ENCODE measurements at regions of chr19 and their contacts with region 1.

Region 1: GRCh38 chr19:39435499-39436349 is at the start of gene RPS16:
- DNase-seq: peak; percentile 100
- H3K4me3 Mint-ChIP-seq: peak within 1 kb of the TSS; percentile 100
- H3K27ac Mint-ChIP-seq: peak within 1 kb of the TSS; percentile 100
- H3K4me1 Mint-ChIP-seq: peaks cover 55% of the 10 kb centered on the region
- H3K27me3 Mint-ChIP-seq: no peaks in the 10 kb centered on the region
- total RNA-seq, gene RPS16: 3,682 to 3,746 TPM

Region 2: GRCh38 chr19:39351537-39352064 is 84.1 kb before region 1 on chr19:
- CTCF ChIA-PET with region 1: interaction called, 3 read pairs
- POLR2A ChIA-PET with region 1: interaction called, 3 read pairs
- intact Hi-C with region 1: loop called (anchors 1 kb)
- DNase-seq: peak; percentile 75
- H3K4me3 Mint-ChIP-seq: no peak overlapping the region
- H3K27ac Mint-ChIP-seq: peak overlapping the region; percentile 84
- H3K4me1 Mint-ChIP-seq: peaks cover 42% of the 10 kb centered on the region
- H3K27me3 Mint-ChIP-seq: no peaks in the 10 kb centered on the region

Region 3: DNA sequence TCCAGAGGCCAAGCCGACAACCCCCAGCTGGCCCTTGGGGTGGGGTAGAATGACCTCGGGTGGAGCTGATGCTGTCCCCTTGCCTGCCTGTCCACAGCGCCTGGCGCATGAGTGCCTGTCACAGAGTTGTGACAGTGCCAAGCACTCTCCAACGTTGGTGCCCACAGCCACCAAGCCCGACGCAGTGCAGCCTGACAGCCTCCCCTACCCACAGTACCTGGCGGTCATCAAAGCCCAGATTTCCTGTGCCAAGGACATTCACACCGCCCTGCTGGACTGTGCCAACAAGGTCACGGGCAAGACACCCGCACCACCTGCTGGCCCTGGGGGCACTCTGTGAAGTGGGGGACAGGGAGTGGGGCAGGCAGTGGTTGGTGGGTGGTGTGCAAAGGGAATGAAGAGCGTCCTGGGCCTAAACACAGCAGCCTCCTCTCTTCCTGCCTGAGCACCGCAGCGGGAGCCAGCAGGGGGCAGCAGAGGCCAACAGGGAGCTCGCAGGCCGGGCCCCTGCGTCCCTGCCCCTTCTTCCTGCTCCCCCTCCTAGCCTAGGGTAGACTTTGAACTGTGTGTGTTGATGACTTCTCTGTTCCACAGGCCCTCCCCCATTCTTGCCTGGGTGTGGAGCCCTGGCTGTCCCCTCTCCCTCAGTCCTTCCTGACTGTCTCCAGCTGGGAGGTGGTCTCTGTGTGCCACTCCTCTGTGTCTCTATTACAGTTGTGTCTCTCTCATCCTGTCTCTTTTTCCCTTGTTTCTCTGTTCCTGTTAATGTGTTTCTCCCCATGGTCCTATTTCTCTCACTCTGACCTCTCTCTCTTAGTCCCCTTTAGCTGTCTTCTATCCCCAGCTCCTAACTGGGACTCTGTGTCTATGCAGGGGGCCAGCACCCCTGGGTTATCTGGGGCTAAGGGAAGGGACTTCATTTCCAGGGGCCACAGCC is 38.1 kb before region 1 on chr19:
- CTCF ChIA-PET with region 1: interaction called, 13 read pairs
- POLR2A ChIA-PET with region 1: interaction called, 23 read pairs
- intact Hi-C with region 1: loop called (anchors 1 kb)
- DNase-seq: peak; percentile 96
- H3K4me3 Mint-ChIP-seq: peak overlapping the region; percentile 3
- H3K27ac Mint-ChIP-seq: peak overlapping the region; percentile 85
- H3K4me1 Mint-ChIP-seq: peaks cover 57% of the 10 kb centered on the region
- H3K27me3 Mint-ChIP-seq: no peaks in the 10 kb centered on the region

Region 4: DNA sequence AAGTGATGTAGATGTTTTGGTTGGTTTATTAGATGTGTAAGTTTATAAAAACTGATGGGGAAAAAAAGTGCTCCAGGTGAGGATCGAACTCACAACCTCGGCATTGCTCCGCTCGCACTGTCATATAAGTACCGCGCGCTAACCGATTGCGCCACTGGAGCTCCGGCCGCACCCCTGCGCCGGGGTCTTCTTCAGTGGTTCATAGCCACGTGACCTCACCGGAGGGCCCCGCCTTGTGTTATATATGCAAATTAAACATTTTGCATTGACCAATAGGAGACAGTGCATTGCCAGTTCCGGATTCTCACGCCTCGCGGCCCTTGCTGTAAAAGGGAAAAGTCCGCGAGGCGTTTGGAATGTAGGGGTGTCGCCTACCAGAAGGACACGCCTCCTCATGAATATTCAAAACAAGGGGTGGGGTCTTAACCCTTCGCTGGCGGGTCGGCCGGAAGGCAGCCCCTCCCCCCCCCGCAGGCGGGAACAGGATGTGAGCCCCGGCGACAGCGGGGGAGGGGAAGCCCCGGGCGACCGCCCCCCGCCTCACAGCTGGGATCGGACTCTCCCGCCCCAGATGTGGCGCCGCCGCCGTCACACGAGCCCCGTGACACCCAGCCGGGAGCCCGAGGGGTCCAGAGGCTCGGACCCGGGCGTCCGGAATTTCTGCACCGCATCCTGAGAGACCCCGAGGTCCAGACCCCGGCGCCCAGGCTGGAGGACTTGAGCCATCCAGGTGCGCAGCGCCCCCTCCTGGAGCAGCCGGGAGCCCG is 23.4 kb before region 1 on chr19 and contains the start of gene PLEKHG2:
- CTCF ChIA-PET with region 1: interaction called, 14 read pairs
- POLR2A ChIA-PET with region 1: interaction called, 22 read pairs
- intact Hi-C with region 1: loop called (anchors 1 kb)
- DNase-seq: peak; percentile 98
- H3K4me3 Mint-ChIP-seq: peak within 1 kb of the TSS; percentile 84
- H3K27ac Mint-ChIP-seq: peak within 1 kb of the TSS; percentile 88
- H3K4me1 Mint-ChIP-seq: peaks cover 34% of the 10 kb centered on the region
- H3K27me3 Mint-ChIP-seq: peaks cover 3% of the 10 kb centered on the region
- total RNA-seq, gene PLEKHG2: 74.9 to 80.6 TPM

Region 5: GRCh38 chr19:39480337-39481228 is 44.9 kb after region 1 on chr19 and contains the start of gene TIMM50:
- CTCF ChIA-PET with region 1: interaction called, 25 read pairs
- POLR2A ChIA-PET with region 1: interaction called, 11 read pairs
- intact Hi-C with region 1: no loop called
- DNase-seq: peak; percentile 98
- H3K4me3 Mint-ChIP-seq: peak within 1 kb of the TSS; percentile 82
- H3K27ac Mint-ChIP-seq: peak within 1 kb of the TSS; percentile 78
- H3K4me1 Mint-ChIP-seq: peaks cover 25% of the 10 kb centered on the region
- H3K27me3 Mint-ChIP-seq: no peaks in the 10 kb centered on the region
- total RNA-seq, gene TIMM50: 83.1 to 86.7 TPM

Region 6: DNA sequence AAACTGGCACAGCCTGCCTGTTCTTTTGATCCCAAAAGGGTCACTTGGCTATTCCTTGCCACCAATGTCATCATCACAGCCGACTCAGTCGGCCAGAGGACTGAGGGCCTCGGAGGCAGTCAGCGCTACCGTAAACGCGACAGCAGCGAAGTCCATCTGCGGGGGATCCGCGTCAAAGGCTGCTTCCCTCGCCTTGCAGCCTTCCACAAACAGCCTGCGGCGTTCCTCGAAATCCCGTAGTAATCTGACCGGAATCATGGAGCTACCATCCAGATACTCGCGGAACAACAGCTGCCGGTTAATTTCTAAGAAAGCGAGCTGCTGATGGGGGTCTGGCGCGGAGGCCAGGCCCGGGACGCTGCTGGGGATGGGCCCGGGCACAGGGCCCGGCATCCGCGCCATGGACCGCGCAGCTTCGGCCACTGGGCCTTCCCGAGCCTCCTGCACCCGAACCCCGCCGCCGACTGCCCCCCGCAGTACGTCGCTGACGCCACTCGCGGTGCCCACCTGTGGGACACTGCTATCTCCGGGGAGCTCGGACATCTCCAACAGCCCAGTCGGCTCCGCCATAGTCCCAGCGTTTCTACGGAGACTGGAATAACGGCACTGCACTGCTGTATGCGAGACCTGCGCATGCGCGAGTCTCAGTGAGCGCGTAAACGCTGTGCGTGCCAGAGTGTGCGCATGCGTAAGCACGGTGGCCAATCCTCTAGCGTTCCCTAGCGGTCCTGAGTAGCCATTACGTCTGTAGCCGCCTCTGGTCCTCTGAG is 96.7 kb after region 1 on chr19 and contains the start of gene EID2B:
- CTCF ChIA-PET with region 1: interaction called, 53 read pairs
- POLR2A ChIA-PET with region 1: interaction called, 16 read pairs
- intact Hi-C with region 1: loop called (anchors 1 kb)
- DNase-seq: peak; percentile 96
- H3K4me3 Mint-ChIP-seq: peak within 1 kb of the TSS; percentile 91
- H3K27ac Mint-ChIP-seq: peak within 1 kb of the TSS; percentile 65
- H3K4me1 Mint-ChIP-seq: peaks cover 20% of the 10 kb centered on the region
- H3K27me3 Mint-ChIP-seq: no peaks in the 10 kb centered on the region
- total RNA-seq, gene EID2B: 3.3 to 3.8 TPM

Region 7: DNA sequence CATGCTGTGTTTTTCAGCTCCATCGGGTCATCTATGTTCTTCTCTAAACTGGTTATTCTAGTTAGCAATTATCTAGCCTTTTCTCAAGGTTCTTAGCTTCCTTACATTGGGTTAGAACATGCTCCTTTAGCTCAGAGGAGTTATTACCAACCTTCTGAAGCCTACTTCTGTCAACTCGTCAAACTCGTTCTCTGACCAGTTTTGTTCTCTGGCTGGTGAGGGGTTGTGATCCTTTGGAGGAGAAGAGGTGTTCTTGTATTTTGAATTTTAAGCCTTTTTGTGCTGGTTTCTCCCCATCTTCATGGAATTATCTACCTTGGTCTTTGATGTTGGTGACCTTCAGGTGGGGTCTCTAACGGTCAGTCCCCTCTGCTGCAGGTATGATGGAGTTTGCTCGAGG is 187.5 kb after region 1 on chr19:
- CTCF ChIA-PET with region 1: no interaction called
- POLR2A ChIA-PET with region 1: no interaction called
- intact Hi-C with region 1: no loop called
- DNase-seq: no peak
- H3K4me3 Mint-ChIP-seq: no peak overlapping the region
- H3K27ac Mint-ChIP-seq: no peak overlapping the region
- H3K4me1 Mint-ChIP-seq: no peaks in the 10 kb centered on the region
- H3K27me3 Mint-ChIP-seq: peaks cover 48% of the 10 kb centered on the region

Region 8: GRCh38 chr19:39671738-39672363 is 236.1 kb after region 1 on chr19:
- CTCF ChIA-PET with region 1: interaction called, 26 read pairs
- POLR2A ChIA-PET with region 1: interaction called, 7 read pairs
- intact Hi-C with region 1: loop called (anchors 2 kb)
- DNase-seq: peak; percentile 54
- H3K4me3 Mint-ChIP-seq: no peak overlapping the region
- H3K27ac Mint-ChIP-seq: no peak overlapping the region
- H3K4me1 Mint-ChIP-seq: peaks cover 32% of the 10 kb centered on the region
- H3K27me3 Mint-ChIP-seq: peaks cover 11% of the 10 kb centered on the region